Aorta (tissue), 5 donors: ENCODE measurements at regions of chr6 and their contacts with region 1.

Region 1: GRCh38 chr6:146857180-146857979 is 258.6 kb downstream of the ADGB start:
- DNase-seq: peak; percentile 92 to 96
- ATAC-seq: peak; percentile 98
- H3K4me3 ChIP-seq: no peak overlapping the region
- H3K27ac ChIP-seq: no peak overlapping the region
- H3K4me1 ChIP-seq: no peaks in the 10 kb centered on the region
- H3K27me3 ChIP-seq: no peaks in the 10 kb centered on the region

Region 2: DNA sequence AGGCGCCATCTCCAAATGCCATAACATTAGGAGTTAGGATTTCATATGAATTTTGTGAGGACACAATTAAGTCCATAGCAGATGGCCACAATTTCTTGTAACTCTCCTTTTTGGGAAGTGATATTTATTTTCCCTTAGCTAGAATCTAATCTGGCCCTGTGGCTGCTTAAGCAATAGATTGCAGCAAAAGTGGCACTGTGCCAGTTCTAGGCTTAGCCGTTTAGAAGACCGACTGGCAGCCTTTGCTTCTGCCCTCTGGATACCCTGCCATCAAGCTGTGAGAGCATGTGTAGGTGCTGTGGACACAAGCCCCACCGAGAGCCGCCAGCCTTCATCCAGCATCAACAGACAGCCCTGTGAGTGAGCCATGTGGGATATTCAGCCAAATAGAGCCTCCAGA is 274.5 kb before region 1 on chr6:
- intact Hi-C with region 1: no loop called
- DNase-seq: peak; percentile 69
- ATAC-seq: no peak
- H3K4me3 ChIP-seq: no peak overlapping the region
- H3K27ac ChIP-seq: no peak overlapping the region
- H3K4me1 ChIP-seq: no peaks in the 10 kb centered on the region
- H3K27me3 ChIP-seq: no peaks in the 10 kb centered on the region

Region 3: DNA sequence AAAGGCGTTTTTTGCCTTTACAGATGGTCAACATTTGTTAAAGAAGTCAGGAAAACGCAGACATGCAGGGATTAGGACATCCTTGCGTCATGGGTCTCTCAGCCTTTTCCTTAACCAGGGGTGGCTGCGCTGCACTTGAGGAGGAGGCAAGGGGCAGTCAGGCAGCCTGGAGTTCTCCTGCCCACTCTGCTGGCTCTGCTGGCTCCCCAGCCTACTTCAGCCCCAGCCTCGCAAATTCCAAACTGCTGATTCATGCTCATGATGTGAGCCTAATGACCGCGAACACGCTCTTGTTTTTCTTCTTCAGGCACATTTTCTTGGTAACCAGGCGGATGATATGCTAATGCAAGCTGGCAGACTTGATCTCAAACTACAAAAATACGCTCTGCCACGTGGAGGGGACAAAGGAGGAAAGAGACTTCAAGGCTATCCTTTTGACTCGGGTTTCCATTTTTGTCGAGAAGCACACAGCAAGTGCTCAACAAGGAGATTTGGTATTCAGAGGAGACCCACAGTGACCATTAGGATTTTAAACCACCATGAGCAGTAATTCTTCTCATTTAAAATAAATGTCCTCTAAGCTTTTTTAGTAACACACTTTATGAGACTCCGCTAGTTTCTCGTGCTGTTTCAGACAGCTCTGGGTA is 56.6 kb after region 1 on chr6:
- intact Hi-C with region 1: loop called (anchors 2 to 5 kb)
- DNase-seq: peak; percentile 85 to 86
- ATAC-seq: peak; percentile 91
- H3K4me3 ChIP-seq: peak overlapping the region in 1 of 2 donors; percentile 24
- H3K27ac ChIP-seq: peak overlapping the region; percentile 9 to 95
- H3K4me1 ChIP-seq: peaks cover 0 to 4% of the 10 kb centered on the region in 2 donors
- H3K27me3 ChIP-seq: no peaks in the 10 kb centered on the region

Region 4: DNA sequence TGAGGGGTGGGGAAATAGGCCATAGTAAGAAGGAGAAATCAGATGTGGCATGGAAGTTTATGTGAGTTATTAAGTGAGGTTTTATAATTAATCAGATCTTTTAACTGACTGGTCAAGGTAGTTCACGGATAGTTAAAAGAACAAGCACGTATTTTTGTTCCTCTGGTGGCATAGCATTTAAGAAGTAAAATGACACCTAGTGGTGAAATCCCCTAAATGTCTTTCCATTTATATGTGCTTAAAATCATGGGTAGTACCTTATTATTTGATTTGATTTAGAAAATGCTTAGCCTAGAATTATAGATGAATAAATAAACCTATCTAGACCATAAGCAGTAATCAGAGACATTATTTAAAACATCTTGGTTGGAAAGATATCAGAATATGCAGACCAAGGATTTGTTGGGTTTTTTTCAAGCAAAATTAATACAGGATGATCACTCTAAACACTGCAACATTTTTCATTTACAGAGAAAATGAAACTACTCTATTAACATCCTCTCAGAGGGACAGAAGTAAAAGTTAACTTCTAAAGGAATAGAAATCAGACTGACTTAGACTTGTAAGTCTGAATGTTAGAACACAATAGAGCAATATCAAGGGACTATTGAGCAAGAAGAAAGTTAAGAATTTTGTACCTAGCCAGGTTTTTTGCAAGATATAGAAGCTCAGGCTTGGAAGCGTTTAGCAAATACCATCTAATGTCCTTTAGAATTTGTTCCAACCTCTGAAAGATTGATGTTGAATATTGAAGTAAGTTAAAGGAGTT is 427.9 kb after region 1 on chr6:
- intact Hi-C with region 1: loop called (anchors 2 kb)
- DNase-seq: no peak
- ATAC-seq: peak; percentile 81
- H3K4me3 ChIP-seq: no peak overlapping the region
- H3K27ac ChIP-seq: no peak overlapping the region
- H3K4me1 ChIP-seq: peaks cover 0 to 2% of the 10 kb centered on the region in 2 donors
- H3K27me3 ChIP-seq: no peaks in the 10 kb centered on the region